Activated CD4-positive, alpha-beta memory T cell treated with anti-CD3 and anti-CD28 coated beads for 36 hours (primary cell): ENCODE measurements at regions of chr3 and their contacts with region 1.

Region 1: DNA sequence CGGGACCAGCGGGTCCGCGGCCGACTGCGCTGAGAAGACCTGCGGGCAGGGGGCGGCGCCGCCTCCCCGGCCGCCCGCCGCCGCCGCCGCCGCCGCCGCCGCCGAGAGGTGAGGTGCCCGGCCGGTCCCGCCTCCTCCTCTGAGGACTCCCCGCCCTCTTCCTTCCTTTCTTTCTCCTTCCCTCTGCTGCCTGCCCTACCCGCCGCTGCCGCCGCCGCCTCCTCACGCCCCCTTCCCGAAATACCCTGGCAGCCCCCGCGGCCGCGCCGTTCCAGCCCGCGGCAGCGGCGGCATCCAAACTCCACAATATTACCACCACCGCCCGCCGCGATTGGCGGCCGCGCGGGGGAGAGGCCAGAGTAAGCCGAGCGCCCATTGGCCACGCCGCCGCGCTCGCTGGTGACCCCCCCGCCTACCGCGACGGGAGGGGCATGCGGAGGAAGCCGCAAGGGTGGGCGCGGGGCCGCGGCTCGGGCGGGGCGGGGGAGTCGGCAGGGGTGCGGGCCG is 61.8 kb upstream of the ANKRD28 start:
- DNase-seq: peak; percentile 82
- H3K4me3 Mint-ChIP-seq: peak overlapping the region; percentile 96
- H3K27ac Mint-ChIP-seq: peak overlapping the region; percentile 91
- H3K4me1 Mint-ChIP-seq: peaks cover 21% of the 10 kb centered on the region
- H3K27me3 Mint-ChIP-seq: no peaks in the 10 kb centered on the region

Region 2: DNA sequence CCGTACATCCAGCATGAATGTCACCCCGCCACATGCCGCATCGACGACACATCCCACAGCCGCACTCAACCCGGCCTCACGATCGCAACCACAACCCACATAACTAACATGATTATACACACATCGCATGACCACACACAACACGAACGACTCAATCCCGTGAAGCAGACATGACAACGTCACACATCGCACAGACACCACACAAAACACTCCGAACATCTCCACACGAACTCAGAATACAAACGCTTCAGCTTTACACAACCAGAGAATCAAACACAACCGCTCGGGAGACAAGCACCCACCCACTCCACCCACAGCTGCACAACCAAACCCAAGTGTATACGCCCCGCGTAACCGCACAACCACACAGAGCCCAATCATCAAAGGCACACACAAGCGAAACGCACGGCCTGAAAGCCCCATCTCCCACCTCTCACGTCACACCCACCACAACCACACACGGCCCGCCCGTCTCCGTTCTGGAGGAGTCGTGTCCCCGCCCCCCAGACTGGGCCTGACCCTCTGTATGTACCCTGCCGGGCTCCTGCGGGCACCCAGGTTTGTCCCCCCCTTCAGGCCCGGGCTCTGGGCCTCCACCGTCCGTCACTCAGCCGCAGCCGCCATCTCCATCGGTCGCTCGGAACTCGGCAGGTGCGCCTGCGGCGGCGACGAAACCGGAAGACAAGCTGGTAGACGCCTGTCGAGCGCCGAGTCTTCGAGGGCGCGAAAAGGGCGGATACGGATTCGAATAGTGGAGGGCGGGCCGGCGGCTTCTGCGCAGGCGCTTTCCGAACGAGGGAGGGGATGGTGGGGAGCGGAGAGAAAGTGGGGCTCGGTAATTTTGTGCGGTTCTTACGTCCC is 760.8 kb before region 1 on chr3 and contains the start of gene RBSN:
- CTCF ChIA-PET with region 1: no interaction called
- POLR2A ChIA-PET with region 1: no interaction called
- intact Hi-C with region 1: loop called (anchors 2 kb)
- DNase-seq: peak; percentile 98
- H3K4me3 Mint-ChIP-seq: peak within 1 kb of the TSS; percentile 94
- H3K27ac Mint-ChIP-seq: peak within 1 kb of the TSS; percentile 94
- H3K4me1 Mint-ChIP-seq: peaks cover 18% of the 10 kb centered on the region
- H3K27me3 Mint-ChIP-seq: no peaks in the 10 kb centered on the region
- total RNA-seq, gene RBSN: 15.0 to 15.3 TPM

Region 3: GRCh38 chr3:15601397-15602145 is 258.0 kb before region 1 on chr3 and contains the starts of genes BTD and HACL1:
- CTCF ChIA-PET with region 1: no interaction called
- POLR2A ChIA-PET with region 1: no interaction called
- intact Hi-C with region 1: loop called (anchors 1 kb)
- DNase-seq: peak; percentile 98
- H3K4me3 Mint-ChIP-seq: peak within 1 kb of the TSS; percentile 99
- H3K27ac Mint-ChIP-seq: peak within 1 kb of the TSS; percentile 94
- H3K4me1 Mint-ChIP-seq: peaks cover 43% of the 10 kb centered on the region
- H3K27me3 Mint-ChIP-seq: no peaks in the 10 kb centered on the region
- total RNA-seq, gene BTD: 8.6 to 8.7 TPM
- total RNA-seq, gene HACL1: 29.9 to 30.0 TPM